ENCODE measurements at regions of chr3 and their contacts with region 1.

Region 1: GRCh38 chr3:149129326-149130205 is at the start of gene HPS3:
- DNase-seq: peak; percentile 96
- H3K4me3 Mint-ChIP-seq: peak within 1 kb of the TSS; percentile 89
- H3K27ac Mint-ChIP-seq: peak within 1 kb of the TSS; percentile 79
- H3K4me1 Mint-ChIP-seq: peaks cover 35% of the 10 kb centered on the region
- H3K27me3 Mint-ChIP-seq: peaks cover 15% of the 10 kb centered on the region
- total RNA-seq, gene HPS3: 15.3 and 17.4 TPM in 2 replicates

Region 2: DNA sequence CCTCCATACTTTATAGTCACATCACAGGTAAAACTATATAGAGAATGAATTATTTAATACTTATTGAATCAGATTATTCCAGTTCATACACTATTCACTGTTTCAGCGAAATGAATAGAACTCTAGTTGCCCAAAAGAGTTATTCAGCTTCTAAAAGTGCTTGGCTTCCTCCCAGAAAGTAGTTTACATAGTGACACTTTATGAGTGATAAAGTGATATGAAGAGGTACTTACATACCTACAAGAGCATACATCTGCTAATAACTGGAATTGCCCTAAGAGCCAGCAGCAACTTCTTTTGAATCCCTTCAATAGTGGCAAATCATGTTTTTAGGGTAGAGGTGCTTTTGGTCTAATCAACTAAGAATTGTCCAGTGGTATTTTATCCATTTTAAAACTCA is 1067.0 kb before region 1 on chr3:
- intact Hi-C with region 1: no loop called
- DNase-seq: no peak
- H3K4me3 Mint-ChIP-seq: no peak overlapping the region
- H3K27ac Mint-ChIP-seq: no peak overlapping the region
- H3K4me1 Mint-ChIP-seq: no peaks in the 10 kb centered on the region
- H3K27me3 Mint-ChIP-seq: no peaks in the 10 kb centered on the region

Region 3: GRCh38 chr3:149086232-149086988 is 43.2 kb before region 1 on chr3 and contains the start of gene HLTF:
- intact Hi-C with region 1: loop called (anchors 1 kb)
- DNase-seq: peak; percentile 97
- H3K4me3 Mint-ChIP-seq: peak within 1 kb of the TSS; percentile 98
- H3K27ac Mint-ChIP-seq: peak within 1 kb of the TSS; percentile 88
- H3K4me1 Mint-ChIP-seq: peaks cover 19% of the 10 kb centered on the region
- H3K27me3 Mint-ChIP-seq: no peaks in the 10 kb centered on the region
- total RNA-seq, gene HLTF: 18.9 and 19.6 TPM in 2 replicates

Region 4: DNA sequence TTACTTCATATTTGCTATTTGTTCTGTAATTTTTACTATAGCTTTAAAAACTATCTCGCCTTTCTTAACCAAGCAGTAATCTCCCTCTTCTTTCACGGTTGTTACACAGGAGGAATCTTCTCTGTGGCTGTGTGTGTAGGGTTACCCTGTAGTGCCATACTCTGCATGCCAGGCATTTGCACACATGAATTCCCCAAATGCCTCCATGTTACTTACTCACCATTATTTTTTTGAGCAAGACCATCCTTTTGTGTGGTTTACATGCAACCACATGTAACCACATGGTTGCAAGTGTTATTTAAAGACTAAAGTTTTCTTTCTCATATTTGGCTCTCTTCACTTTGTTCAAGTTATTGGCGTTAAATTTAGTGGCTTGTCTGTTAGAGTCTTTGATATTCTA is 45.3 kb after region 1 on chr3:
- intact Hi-C with region 1: loop called (anchors 1 kb)
- DNase-seq: peak; percentile 62
- H3K4me3 Mint-ChIP-seq: no peak overlapping the region
- H3K27ac Mint-ChIP-seq: no peak overlapping the region
- H3K4me1 Mint-ChIP-seq: peaks cover 9% of the 10 kb centered on the region
- H3K27me3 Mint-ChIP-seq: no peaks in the 10 kb centered on the region

Region 5: DNA sequence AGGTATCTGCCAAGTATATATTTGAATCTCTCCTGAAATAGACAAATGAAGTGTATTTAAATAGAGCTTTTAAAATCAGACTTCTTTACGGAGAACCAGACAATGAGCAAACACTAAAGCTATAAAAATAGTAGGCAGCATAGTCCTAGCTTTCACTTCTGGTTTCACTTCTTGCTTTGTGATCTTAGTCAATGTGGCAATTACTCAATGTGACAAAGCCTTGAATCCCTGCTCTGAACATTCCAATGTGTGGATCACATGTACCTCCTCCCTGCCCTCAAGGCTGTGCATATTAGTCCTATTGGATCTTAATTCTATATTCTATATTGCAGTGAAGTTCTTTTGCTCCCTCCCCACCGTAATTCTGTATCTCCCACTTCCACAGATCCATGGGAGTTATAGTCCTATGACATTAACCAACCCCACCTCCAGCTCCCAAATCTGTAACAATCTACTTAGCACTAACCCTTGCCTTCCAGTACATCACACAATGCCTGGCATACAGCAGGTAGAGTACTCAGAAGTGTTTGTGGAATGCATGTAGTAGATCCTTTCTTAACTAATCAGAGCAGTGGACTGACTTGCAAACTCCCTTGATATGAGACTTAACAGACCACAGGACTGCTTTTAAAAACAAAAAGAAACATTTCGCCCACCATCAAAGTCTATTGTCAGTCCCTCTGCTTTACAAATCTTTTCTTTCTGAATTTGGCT is 116.3 kb after region 1 on chr3:
- intact Hi-C with region 1: loop called (anchors 1 kb)
- DNase-seq: peak; percentile 58
- H3K4me3 Mint-ChIP-seq: peak overlapping the region; percentile 55
- H3K27ac Mint-ChIP-seq: peak overlapping the region; percentile 21
- H3K4me1 Mint-ChIP-seq: peaks cover 43% of the 10 kb centered on the region
- H3K27me3 Mint-ChIP-seq: peaks cover 4% of the 10 kb centered on the region